Dendritic cell treated with granulocyte-macrophage colony-stimulating factor and Interleukin-4, amounts not matched to agents 40 ng/mL and 50 ng/mL, for 4 days (primary cell): ENCODE measurements at regions of chr20 and their contacts with region 1.

Region 1: DNA sequence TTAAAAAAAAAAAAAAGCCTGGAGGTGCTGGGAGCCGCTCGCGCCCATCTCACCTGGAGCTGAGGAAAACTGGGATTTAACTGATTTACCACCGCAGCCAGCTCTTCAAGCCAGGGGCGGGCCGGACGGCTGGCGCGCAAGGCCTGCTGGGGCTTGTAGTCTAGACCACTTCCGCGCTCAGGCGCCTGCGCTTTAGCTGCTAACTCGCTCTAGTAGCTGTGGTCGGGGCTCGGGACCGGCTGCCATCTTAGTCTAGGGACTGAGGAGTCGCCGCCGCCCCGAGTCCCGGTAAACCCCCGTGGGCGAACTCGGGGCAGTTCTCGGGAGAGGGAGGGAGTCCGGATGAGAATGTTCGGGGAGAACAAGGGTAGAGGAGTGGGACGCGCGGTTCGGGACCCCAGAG is at the start of gene ITCH:
- H3K4me3 Mint-ChIP-seq: peak within 1 kb of the TSS; percentile 86
- H3K27ac Mint-ChIP-seq: peak within 1 kb of the TSS; percentile 96
- H3K4me1 Mint-ChIP-seq: peaks cover 31% of the 10 kb centered on the region
- H3K27me3 Mint-ChIP-seq: no peaks in the 10 kb centered on the region

Region 2: GRCh38 chr20:33940666-33941065 is 422.4 kb before region 1 on chr20:
- intact Hi-C with region 1: no loop called
- H3K4me3 Mint-ChIP-seq: no peak overlapping the region
- H3K27ac Mint-ChIP-seq: no peak overlapping the region
- H3K4me1 Mint-ChIP-seq: no peaks in the 10 kb centered on the region
- H3K27me3 Mint-ChIP-seq: no peaks in the 10 kb centered on the region

Region 3: DNA sequence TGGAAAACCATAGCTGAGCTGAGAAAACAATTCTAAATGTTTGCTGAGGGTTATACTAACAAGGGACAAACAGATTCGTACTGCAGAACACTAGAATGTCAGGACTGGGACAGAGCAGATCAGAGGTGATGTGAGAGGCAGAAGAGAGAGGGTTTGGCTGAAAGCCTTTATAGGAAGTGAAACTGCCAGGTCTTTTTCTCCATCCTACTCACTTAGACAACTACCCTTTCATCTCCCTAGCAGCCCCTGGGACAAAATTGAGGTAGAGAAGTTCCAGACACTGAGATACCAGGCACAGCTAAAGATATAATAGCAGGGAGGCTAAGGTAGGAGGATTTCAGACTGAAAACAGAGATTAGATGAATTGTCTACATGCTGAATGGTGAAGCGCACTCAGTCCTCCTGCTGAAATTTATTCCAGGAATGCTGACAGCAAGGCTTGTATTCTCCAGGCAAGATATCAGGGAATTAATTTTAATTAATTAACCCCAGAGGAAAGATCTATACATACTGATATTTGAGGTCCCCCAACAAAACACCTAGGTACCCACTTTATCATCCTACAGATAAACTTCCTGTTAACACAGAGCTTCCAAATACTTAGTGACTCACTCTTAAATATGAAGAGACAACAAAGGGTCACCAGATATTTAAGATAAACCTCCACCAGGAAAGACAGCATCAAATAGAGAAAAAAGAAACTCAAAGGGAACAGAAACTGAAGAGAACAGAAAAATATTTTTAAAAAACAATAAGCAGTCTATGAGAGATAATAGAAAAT is 238.4 kb before region 1 on chr20:
- intact Hi-C with region 1: no loop called
- H3K4me3 Mint-ChIP-seq: no peak overlapping the region
- H3K27ac Mint-ChIP-seq: no peak overlapping the region
- H3K4me1 Mint-ChIP-seq: peaks cover 11% of the 10 kb centered on the region
- H3K27me3 Mint-ChIP-seq: peaks cover 16% of the 10 kb centered on the region

Region 4: DNA sequence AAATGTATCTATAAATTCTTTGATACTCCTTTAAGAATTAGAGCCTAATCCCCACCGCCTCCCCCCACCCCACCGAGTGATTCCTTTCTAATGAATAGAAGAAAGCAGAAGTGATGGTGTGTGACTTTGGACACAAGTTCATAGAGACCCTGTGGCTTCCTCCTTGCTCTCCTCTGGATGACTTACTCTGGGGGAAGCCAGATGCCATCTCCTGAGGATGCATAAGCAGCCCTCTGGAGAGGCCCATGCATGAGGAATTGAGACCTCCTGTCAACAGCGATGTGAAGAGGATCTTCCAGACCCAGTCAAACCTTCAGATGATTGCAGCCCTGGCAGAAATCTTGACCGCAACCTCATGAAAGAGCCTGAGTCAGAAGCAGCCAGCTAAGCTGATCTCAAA is 81.0 kb before region 1 on chr20:
- intact Hi-C with region 1: no loop called
- H3K4me3 Mint-ChIP-seq: no peak overlapping the region
- H3K27ac Mint-ChIP-seq: peak overlapping the region; percentile 44
- H3K4me1 Mint-ChIP-seq: peaks cover 33% of the 10 kb centered on the region
- H3K27me3 Mint-ChIP-seq: no peaks in the 10 kb centered on the region

Region 5: GRCh38 chr20:34302723-34303528 is 60.1 kb before region 1 on chr20 and contains the start of gene AHCY:
- intact Hi-C with region 1: loop called (anchors 1 kb)
- H3K4me3 Mint-ChIP-seq: no peak within 1 kb of the TSS
- H3K27ac Mint-ChIP-seq: no peak within 1 kb of the TSS
- H3K4me1 Mint-ChIP-seq: peaks cover 7% of the 10 kb centered on the region
- H3K27me3 Mint-ChIP-seq: no peaks in the 10 kb centered on the region

Region 6: DNA sequence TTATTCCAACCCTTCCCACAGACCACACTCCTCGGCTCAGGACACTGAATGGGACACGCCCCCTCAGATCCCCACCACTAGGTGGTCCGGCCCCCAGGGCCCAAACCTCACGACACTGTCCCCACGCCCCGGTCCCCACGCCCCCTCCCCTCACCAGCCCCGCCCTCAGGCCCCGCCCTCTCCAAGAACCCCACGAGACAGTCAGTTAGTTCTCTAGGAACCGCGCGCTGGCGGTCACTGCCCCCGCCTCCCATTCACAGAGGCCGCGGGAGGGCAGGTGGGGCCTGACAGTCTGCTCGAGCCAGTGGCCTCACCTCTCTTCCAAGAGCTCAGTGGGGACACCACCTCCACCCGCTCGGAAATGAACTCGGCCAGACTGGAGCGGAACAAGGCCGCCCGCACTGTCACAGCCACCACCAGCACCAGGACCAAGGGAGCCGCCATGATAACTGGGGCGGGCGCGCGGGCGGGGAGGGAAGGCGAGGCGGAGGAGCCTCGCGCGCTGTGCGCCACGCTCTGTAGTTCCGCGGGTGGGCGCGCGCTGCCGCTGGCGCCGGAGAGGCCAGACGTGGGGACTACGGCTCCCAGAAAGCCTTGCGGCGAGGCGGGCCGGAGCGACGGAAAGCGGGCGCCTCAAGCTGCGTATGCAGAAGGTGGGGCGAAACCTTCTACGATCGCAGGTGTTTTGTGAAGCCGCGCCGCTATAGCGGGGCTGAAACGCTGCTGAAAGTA is 313.7 kb after region 1 on chr20 and contains the start of gene PIGU:
- intact Hi-C with region 1: loop called (anchors 5 kb)
- H3K4me3 Mint-ChIP-seq: peak within 1 kb of the TSS; percentile 82
- H3K27ac Mint-ChIP-seq: peak within 1 kb of the TSS; percentile 92
- H3K4me1 Mint-ChIP-seq: peaks cover 19% of the 10 kb centered on the region
- H3K27me3 Mint-ChIP-seq: no peaks in the 10 kb centered on the region